Activated T-helper 1 cell treated with anti-CD3 and anti-CD28 coated beads, Interleukin-12 subunit alpha, Interleukin-12 subunit beta, Interleukin-2, Interleukin-4 antibody, amounts not matched to agents 30 ng/mL and 10 ng/mL and 1 ng/mL, durations not matched to agents 14 hours and 24 hours and 36 hours (primary cell): ENCODE measurements at regions of chr17 and their contacts with region 1.

Region 1: DNA sequence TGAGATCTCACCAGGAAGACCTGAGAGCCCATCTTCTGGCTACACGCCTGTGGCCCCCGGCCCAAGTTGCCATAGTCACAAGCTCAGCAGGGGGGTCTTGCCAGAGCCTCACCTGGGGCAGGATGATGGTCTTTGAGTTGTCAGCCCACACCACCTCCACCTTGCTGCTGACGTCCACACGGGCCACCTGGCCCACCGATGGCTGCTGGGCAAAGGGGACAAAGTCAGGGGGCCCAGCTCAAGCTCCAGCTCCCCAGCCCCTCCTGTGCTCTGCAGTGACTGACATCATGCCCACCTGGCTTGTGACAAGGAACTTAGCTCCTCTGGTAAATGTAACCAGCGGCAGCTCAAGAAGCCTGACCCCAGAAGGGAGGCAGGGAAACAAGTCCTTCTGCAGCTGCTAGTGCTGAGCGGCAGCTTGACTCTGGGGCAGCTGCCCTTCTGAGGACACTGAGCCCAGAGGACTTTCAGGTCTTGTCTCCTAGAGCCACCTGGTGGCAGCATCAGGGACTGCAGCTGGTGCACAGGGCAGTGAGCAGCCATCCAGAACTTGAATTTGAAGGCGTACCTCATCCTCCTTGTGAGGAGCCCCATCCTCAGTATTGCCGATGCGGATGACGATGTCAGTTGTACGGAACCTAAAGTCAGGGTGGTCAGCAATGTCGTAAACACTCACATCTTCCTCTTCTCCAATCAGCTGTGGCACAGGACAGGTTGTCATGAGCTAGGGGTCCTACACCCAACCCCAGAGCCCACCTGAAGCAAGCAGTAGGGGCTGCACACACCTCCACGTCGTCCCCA is 13.5 kb downstream of the SPHK1 start:
- DNase-seq: peak; percentile 73
- H3K4me3 Mint-ChIP-seq: no peak overlapping the region
- H3K27ac Mint-ChIP-seq: no peak overlapping the region
- H3K4me1 Mint-ChIP-seq: no peaks in the 10 kb centered on the region
- H3K27me3 Mint-ChIP-seq: no peaks in the 10 kb centered on the region

Region 2: DNA sequence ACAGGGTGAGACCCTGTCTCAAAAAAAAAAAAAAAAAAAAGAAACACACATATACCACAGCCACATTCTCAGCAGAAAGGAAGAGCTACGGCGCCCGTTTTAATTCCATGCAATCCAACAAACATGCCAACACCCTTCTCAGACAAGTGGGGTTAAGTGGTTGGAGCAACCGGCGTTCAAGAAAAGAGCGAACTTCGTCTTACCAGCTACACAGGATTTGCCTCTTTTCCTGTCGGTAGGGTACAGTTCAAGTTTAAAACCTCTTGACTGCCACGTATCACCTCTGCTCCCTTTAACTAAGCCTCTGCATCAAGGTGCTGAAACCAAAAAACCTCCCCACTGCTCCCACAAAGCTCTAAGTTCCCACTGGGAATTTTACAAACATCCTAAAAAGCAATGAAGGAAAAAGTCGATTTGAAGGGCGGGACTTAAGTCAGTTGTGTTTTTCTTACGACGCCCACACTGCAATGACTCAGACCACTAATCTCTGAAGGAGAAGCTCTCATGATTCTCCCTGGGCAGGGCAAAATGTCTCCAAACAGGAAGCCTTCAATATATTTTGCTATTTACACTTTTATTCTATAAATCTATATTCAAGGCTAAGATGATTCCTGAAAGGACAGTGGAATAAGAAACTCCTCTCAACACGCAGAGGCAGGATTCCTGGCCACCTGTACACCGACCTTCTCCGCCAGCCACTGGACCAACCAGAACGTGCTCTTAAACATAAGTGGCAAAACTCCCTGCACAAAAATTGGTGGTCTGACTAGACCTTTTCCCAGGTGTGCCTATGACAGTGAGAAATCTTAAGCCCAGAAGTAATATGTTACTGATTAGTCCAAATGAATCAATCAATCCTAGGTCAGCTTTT is 344.4 kb before region 1 on chr17:
- intact Hi-C with region 1: no loop called
- DNase-seq: no peak
- H3K4me3 Mint-ChIP-seq: no peak overlapping the region
- H3K27ac Mint-ChIP-seq: peak overlapping the region; percentile 34
- H3K4me1 Mint-ChIP-seq: peaks cover 14% of the 10 kb centered on the region
- H3K27me3 Mint-ChIP-seq: no peaks in the 10 kb centered on the region

Region 3: DNA sequence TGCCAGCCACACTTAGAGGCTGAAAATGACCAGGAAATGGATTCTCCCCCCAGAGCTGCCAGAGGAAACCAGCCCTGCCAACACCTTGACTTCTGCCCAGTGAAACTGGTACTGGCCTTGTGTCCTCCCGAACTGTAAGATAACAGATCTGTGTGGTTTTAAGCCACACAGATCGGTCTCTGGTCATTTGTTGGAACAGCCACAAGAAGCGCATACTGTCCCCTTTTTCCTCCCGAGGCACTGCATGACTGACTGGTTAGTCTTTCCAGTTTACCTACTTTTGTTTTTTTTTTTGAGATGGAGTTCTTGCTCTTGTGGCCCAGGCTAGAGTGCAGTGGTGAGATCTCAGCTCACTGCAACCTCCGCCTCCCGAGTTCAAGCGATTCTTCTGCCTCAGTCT is 95.3 kb before region 1 on chr17:
- intact Hi-C with region 1: loop called (anchors 1 kb)
- DNase-seq: no peak
- H3K4me3 Mint-ChIP-seq: no peak overlapping the region
- H3K27ac Mint-ChIP-seq: no peak overlapping the region
- H3K4me1 Mint-ChIP-seq: peaks cover 5% of the 10 kb centered on the region
- H3K27me3 Mint-ChIP-seq: no peaks in the 10 kb centered on the region

Region 4: GRCh38 chr17:76353599-76354316 is 44.1 kb before region 1 on chr17 and contains the start of gene PRPSAP1:
- intact Hi-C with region 1: loop called (anchors 1 kb)
- DNase-seq: peak; percentile 82
- H3K4me3 Mint-ChIP-seq: peak within 1 kb of the TSS; percentile 93
- H3K27ac Mint-ChIP-seq: peak within 1 kb of the TSS; percentile 99
- H3K4me1 Mint-ChIP-seq: peaks cover 28% of the 10 kb centered on the region
- H3K27me3 Mint-ChIP-seq: peaks cover 3% of the 10 kb centered on the region
- total RNA-seq, gene PRPSAP1: 41.2 and 44.0 TPM in 2 replicates